GM12878 (cell line): ENCODE measurements at regions of chrX and their contacts with region 1.

Region 1: GRCh38 chrX:101595739-101596419 is 21.9 kb downstream of the ARMCX6 start:
- DNase-seq: peak; percentile 62
- ATAC-seq: peak; percentile 99
- H3K4me3 ChIP-seq: no peak overlapping the region
- H3K27ac ChIP-seq: no peak overlapping the region
- H3K4me1 ChIP-seq: no peaks in the 10 kb centered on the region; the same call in 1 of the 2 replicates
- H3K27me3 ChIP-seq: no peaks in the 10 kb centered on the region
- CTCF ChIP-seq: peak; percentile 48 to 77 (median 56); a peak in 5 of 6 replicates
- EP300 ChIP-seq: peak in 1 of 2 experiments; percentile 40; a peak in 1 of 4 replicates
- POLR2A ChIP-seq: no peak
- RAD21 ChIP-seq: peak; percentile 86

Region 2: GRCh38 chrX:100674705-100675104 is 921.2 kb before region 1 on chrX:
- CTCF ChIA-PET with region 1: no interaction called
- POLR2A ChIA-PET with region 1: no interaction called
- RAD21 ChIA-PET with region 1: no interaction called
- SMC1A ChIA-PET with region 1: no interaction called
- in situ Hi-C with region 1: no loop called
- intact Hi-C with region 1: no loop called
- DNase-seq: no peak
- ATAC-seq: peak; percentile 34
- H3K4me3 ChIP-seq: no peak overlapping the region
- H3K27ac ChIP-seq: no peak overlapping the region
- H3K4me1 ChIP-seq: no peaks in the 10 kb centered on the region
- H3K27me3 ChIP-seq: no peaks in the 10 kb centered on the region
- CTCF ChIP-seq: no peak
- EP300 ChIP-seq: no peak
- POLR2A ChIP-seq: no peak
- RAD21 ChIP-seq: no peak

Region 3: DNA sequence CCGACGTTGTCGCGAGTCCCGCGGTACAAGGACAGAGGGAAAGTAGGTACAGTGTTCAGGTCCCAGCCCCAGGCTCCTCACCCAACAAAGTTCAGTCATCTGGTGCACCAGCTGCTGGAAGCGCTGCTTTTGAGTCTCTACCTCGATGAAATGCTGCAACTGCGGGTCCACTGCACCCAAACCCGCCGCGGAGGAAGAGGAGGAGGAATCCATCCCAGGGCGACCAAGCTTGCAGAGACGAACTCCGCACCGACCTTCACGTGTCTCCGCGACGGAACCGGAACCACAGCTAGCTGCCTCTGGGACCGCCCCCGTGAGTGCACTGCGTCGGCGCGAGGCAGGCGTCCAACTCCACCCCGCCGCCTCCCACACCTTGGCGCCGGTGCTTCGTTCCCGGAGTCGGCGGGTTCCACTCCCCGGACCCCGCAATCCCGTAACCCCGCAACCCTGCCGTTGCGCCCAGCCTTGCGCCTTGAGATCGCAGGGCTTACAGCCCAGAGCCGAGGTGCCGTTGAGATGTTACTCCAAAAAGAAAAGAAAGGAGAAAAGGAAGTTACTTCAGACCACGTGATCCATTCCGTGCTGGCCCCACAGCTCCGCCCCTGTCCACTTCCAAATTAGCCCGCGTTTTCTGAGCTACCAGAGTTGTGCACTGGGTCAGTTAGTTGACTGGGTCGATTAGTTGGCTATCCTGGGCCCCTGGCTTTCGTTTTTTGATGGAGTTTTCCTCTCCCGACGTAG is 247.3 kb before region 1 on chrX and contains the start of gene TIMM8A:
- CTCF ChIA-PET with region 1: no interaction called
- POLR2A ChIA-PET with region 1: no interaction called
- RAD21 ChIA-PET with region 1: no interaction called
- SMC1A ChIA-PET with region 1: no interaction called
- in situ Hi-C with region 1: no loop called
- intact Hi-C with region 1: no loop called
- DNase-seq: peak; percentile 31
- ATAC-seq: peak; percentile 99
- H3K4me3 ChIP-seq: peak within 1 kb of the TSS; percentile 87
- H3K27ac ChIP-seq: peak within 1 kb of the TSS; percentile 72
- H3K4me1 ChIP-seq: 0 out of 2 replicates have a peak, but pooled peaks cover 3% of the 10 kb centered on the region
- H3K27me3 ChIP-seq: no peaks in the 10 kb centered on the region
- CTCF ChIP-seq: no peak
- EP300 ChIP-seq: no peak
- POLR2A ChIP-seq: peak; percentile 88
- RAD21 ChIP-seq: no peak
- polyA plus RNA-seq, gene TIMM8A: 84.5 to 92.7 TPM

Region 4: DNA sequence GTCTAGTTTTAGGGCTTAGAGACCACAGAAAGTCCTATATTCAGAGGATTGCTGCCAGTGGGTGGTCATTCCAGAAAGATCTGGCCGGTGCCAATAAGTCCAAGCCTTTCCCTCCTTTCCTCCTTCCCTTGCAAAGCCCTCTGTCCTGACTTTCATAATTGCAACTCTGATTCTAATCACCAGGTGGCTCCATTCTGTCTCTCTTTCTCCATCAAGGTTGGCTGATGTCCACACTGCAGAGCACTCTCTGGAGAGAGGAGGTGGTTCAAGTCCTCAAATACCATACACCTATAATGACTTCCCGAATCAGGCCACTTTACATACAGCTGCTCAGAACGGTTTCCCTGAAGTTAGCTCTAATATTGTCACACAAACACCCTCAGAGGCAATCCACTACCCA is 133.0 kb before region 1 on chrX:
- CTCF ChIA-PET with region 1: interaction called, 4 read pairs
- POLR2A ChIA-PET with region 1: no interaction called
- RAD21 ChIA-PET with region 1: no interaction called
- SMC1A ChIA-PET with region 1: interaction called, 4 read pairs
- in situ Hi-C with region 1: no loop called
- intact Hi-C with region 1: loop called (anchors 5 kb)
- DNase-seq: no peak
- ATAC-seq: peak; percentile 71
- H3K4me3 ChIP-seq: no peak overlapping the region
- H3K27ac ChIP-seq: no peak overlapping the region
- H3K4me1 ChIP-seq: no peaks in the 10 kb centered on the region
- H3K27me3 ChIP-seq: no peaks in the 10 kb centered on the region
- CTCF ChIP-seq: peak; percentile 30 to 45 (median 38); a peak in 4 of 6 replicates
- EP300 ChIP-seq: no peak
- POLR2A ChIP-seq: no peak
- RAD21 ChIP-seq: peak; percentile 32

Region 5: DNA sequence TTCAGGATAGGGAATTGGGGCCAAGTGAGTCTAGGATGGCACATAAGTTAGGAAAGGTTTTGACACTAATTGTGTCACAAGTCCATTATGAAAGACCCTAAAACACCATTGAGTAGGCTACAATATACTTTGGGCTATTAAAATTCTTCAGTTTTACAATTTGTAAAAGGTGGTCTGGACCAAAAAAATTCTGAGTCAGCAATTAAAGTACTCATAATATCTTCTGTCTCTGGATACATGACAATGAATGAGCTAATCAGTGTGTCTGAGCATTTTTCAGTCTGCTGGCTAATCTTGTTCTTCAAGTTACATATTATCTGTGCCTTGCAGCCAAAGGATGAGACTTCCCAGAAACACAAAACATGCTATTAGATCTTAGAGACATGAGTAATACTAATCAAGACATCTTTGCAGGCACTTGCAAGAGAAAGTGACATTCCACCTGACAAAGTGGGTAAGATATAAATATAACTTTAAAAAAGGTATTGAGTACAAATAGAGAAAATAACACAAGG is 31.2 kb before region 1 on chrX:
- CTCF ChIA-PET with region 1: no interaction called
- POLR2A ChIA-PET with region 1: no interaction called
- RAD21 ChIA-PET with region 1: no interaction called
- SMC1A ChIA-PET with region 1: no interaction called
- in situ Hi-C with region 1: no loop called
- intact Hi-C with region 1: no loop called
- DNase-seq: no peak
- ATAC-seq: no peak
- H3K4me3 ChIP-seq: no peak overlapping the region
- H3K27ac ChIP-seq: no peak overlapping the region
- H3K4me1 ChIP-seq: no peaks in the 10 kb centered on the region
- H3K27me3 ChIP-seq: no peaks in the 10 kb centered on the region
- CTCF ChIP-seq: no peak
- EP300 ChIP-seq: no peak
- POLR2A ChIP-seq: no peak
- RAD21 ChIP-seq: no peak

Region 6: DNA sequence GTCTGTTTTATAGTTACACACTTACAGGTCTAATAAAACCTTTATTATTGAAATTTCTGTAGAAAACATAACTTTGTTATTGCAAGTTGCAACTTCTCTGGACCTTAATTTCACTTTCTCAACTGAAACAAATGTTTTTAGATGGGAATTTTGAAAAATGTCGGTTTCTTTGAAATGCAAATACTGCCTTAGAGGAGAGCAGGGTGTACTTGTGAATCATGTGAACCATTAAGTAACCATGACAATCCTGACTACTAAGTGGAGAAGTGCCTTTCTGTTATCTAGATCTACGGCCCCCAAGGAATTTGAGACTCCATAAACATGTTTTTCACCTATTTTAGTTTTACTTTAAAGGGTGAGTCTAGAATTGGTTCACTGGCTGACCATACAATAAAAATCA is 72.3 kb after region 1 on chrX:
- CTCF ChIA-PET with region 1: no interaction called
- POLR2A ChIA-PET with region 1: no interaction called
- RAD21 ChIA-PET with region 1: no interaction called
- SMC1A ChIA-PET with region 1: no interaction called
- in situ Hi-C with region 1: no loop called
- intact Hi-C with region 1: no loop called
- DNase-seq: no peak
- ATAC-seq: no peak
- H3K4me3 ChIP-seq: no peak overlapping the region
- H3K27ac ChIP-seq: no peak overlapping the region
- H3K4me1 ChIP-seq: no peaks in the 10 kb centered on the region
- H3K27me3 ChIP-seq: peaks cover 0 to 2% of the 10 kb centered on the region in 2 experiments; a peak in 1 of 4 replicates
- CTCF ChIP-seq: no peak
- EP300 ChIP-seq: no peak
- POLR2A ChIP-seq: no peak
- RAD21 ChIP-seq: no peak

Region 7: GRCh38 chrX:101759000-101759399 is 163.1 kb after region 1 on chrX:
- CTCF ChIA-PET with region 1: interaction called, 7 read pairs
- POLR2A ChIA-PET with region 1: no interaction called
- RAD21 ChIA-PET with region 1: no interaction called
- SMC1A ChIA-PET with region 1: interaction called, 5 read pairs
- in situ Hi-C with region 1: no loop called
- intact Hi-C with region 1: loop called (anchors 5 kb)
- DNase-seq: no peak
- ATAC-seq: peak; percentile 90
- H3K4me3 ChIP-seq: no peak overlapping the region
- H3K27ac ChIP-seq: no peak overlapping the region
- H3K4me1 ChIP-seq: no peaks in the 10 kb centered on the region
- H3K27me3 ChIP-seq: no peaks in the 10 kb centered on the region
- CTCF ChIP-seq: peak; percentile 30 to 49 (median 31); a peak in 5 of 6 replicates
- EP300 ChIP-seq: no peak
- POLR2A ChIP-seq: no peak
- RAD21 ChIP-seq: peak; percentile 41

Region 8: GRCh38 chrX:101799387-101799786 is 203.5 kb after region 1 on chrX:
- CTCF ChIA-PET with region 1: interaction called, 11 read pairs
- POLR2A ChIA-PET with region 1: no interaction called
- RAD21 ChIA-PET with region 1: interaction called, 4 read pairs
- SMC1A ChIA-PET with region 1: interaction called, 3 read pairs
- in situ Hi-C with region 1: loop called (anchors 5 kb)
- intact Hi-C with region 1: loop called (anchors 5 kb)
- DNase-seq: peak; percentile 62
- ATAC-seq: peak; percentile 100
- H3K4me3 ChIP-seq: no peak overlapping the region
- H3K27ac ChIP-seq: no peak overlapping the region
- H3K4me1 ChIP-seq: no peaks in the 10 kb centered on the region
- H3K27me3 ChIP-seq: no peaks in the 10 kb centered on the region
- CTCF ChIP-seq: peak; percentile 53 to 63 (median 60); a peak in 5 of 6 replicates
- EP300 ChIP-seq: no peak
- POLR2A ChIP-seq: no peak
- RAD21 ChIP-seq: peak; percentile 58